ENCODE measurements at regions of chr16 and their contacts with region 1.

Region 1: DNA sequence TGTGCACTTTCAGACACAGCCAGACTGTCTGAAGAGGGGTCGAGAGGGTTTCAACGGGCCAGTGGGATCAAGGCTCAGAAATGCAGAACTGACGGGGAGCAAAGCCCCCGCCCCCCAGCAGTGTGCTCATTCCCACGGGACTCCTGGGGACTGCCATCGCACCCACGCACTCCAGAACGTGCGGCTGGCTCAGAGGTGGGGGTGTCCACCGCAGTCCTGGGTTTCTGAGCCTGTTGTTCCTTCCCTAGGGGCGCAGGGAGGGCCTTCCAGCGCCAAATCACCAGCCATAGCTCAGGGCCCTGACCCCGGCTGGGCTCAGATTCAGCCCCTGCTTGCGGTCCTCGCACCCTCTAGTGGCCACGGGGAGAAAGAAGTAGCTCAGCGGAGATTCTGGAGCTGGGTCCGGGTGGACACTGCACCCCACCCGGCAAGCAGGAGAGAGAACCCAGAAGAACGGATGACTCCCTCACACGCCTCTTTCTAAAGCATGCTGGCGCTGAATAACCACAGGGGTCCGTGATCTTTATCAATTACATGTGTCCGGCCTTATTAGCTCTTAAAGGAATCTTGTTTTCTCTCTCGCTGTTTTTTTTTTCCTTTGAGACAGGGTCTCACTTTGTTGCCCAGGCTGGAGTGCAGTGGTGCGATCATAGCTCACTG is 45.0 kb upstream of the USP7 start:
- DNase-seq: peak; percentile 88
- ATAC-seq: peak; percentile 91

Region 2: DNA sequence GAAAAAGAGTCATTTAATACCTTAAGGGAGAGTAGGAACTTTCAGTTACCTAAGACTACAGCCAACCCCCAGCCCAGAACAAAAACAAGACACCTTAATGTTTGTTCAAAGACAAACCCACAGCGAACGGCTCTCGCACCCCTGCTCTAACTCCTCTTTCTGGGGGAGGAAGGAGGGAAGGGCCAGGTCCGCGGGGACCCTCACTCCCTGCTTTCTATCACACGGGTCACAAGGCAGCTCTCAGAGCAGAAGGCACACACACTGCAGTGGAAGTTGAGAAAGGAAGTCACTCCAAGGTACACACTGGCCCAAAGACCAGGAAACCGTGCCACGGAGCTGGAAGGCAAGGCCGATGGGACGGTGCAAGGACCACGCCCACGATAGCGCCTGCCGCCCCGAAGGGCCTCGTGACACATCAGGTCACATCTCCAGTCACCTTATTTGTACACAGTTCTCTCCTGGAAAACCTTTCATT is 116.6 kb before region 1 on chr16:
- intact Hi-C with region 1: loop called (anchors 10 kb)
- DNase-seq: no peak
- ATAC-seq: no peak